Activated CD4-positive, alpha-beta T cell treated with anti-CD3 and anti-CD28 coated beads, Interleukin-2, amount 10 ng/mL, durations not matched to agents 7 days and 5 days (primary cell): ENCODE measurements at regions of chr17 and their contacts with region 1.

Region 1: DNA sequence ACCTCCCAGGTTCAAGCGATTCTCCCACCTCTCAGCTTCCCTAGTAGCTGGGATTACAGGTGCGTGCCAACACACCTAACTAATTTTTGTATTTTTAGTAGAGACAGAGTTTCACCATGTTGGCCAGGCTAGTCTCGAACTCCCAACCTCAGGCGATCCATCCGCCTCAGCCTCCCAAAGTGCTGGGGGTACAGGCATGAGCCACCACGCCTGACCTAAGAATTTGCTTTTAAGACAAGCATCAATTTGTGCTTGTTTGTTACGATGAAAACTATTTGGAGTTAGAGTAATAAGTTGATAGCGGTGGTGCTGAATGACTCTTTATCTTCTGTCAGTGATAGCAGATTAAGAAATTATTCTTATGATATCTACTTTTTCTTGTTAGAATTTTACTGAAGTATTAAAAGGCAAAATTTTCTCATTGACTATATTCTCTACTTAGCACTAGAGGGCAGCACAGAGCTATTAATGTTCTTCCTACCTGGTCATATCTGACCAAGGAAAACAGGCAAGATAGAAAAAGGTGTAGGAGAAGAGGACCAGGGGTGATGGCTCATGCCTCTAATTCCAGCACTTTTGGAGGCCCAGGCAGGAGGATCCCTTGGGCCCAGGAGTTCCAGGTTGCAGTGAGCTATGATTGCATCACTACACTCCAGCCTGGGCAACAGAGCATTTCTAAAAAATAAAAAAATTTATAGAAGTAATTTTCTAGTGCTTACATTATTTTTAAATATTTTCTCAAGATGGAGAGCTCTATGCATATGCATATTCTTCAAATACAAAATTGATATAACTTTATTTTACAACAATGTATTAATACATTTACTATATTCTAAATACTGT is 24.5 kb downstream of the STXBP4 start:
- DNase-seq: peak; percentile 34
- H3K4me3 Mint-ChIP-seq: no peak overlapping the region
- H3K27ac Mint-ChIP-seq: no peak overlapping the region
- H3K4me1 Mint-ChIP-seq: no peaks in the 10 kb centered on the region
- H3K27me3 Mint-ChIP-seq: no peaks in the 10 kb centered on the region

Region 2: GRCh38 chr17:54906683-54907082 is 86.3 kb before region 1 on chr17:
- CTCF ChIA-PET with region 1: no interaction called
- POLR2A ChIA-PET with region 1: no interaction called
- DNase-seq: no peak
- H3K4me3 Mint-ChIP-seq: no peak overlapping the region
- H3K27ac Mint-ChIP-seq: no peak overlapping the region
- H3K4me1 Mint-ChIP-seq: no peaks in the 10 kb centered on the region
- H3K27me3 Mint-ChIP-seq: peaks cover 5% of the 10 kb centered on the region

Region 3: DNA sequence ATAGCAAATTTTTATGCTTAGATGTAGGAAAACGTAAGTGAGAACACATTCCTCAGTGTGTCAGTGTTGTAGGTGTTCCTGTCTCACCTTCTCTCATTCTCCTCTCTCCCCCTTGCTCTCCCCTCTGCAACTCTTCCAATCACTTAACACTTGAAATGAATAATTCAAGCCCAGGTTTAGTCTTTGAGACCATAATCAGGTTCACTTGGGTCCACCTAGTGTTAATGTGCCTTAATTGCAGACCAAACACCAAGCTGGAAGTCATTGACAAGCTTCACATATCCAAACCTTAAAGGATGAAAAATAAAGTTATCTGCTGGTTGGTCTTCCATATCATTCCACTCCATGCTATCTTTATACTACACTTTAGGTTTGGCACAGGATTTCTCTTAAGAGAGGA is 12.5 kb after region 1 on chr17:
- CTCF ChIA-PET with region 1: interaction called, 11 read pairs
- POLR2A ChIA-PET with region 1: no interaction called
- DNase-seq: peak; percentile 12
- H3K4me3 Mint-ChIP-seq: no peak overlapping the region
- H3K27ac Mint-ChIP-seq: no peak overlapping the region
- H3K4me1 Mint-ChIP-seq: no peaks in the 10 kb centered on the region
- H3K27me3 Mint-ChIP-seq: no peaks in the 10 kb centered on the region

Region 4: GRCh38 chr17:55356434-55357328 is 363.7 kb after region 1 on chr17:
- CTCF ChIA-PET with region 1: interaction called, 19 read pairs
- POLR2A ChIA-PET with region 1: no interaction called
- DNase-seq: peak; percentile 85
- H3K4me3 Mint-ChIP-seq: no peak overlapping the region
- H3K27ac Mint-ChIP-seq: no peak overlapping the region
- H3K4me1 Mint-ChIP-seq: peaks cover 5% of the 10 kb centered on the region
- H3K27me3 Mint-ChIP-seq: peaks cover 29% of the 10 kb centered on the region